Heart right ventricle (tissue), 16 donors: ENCODE measurements at regions of chr7 and their contacts with region 1.

Region 1: DNA sequence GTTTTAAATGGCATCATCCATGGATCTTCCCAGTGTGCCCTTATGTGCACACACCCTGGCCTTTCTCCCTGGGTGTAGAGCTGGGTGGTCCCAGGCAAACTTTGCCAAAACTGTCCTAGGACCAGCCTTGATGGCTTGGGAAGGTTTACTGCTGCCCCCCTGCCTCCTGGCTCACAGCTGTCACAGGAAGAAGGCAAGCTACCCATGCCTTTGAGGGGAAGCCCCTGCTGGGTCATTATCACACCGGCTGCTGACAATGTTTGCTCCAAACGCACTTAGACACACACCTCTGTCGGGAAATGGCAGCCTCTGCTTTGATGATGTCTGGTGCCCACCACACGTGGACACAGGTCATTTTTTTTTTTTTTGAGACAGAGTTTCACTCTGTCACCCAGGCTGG is 25.2 kb upstream of the FIGNL1 start:
- DNase-seq: no peak
- ATAC-seq: no peak
- H3K4me3 ChIP-seq: no peak overlapping the region
- H3K27ac ChIP-seq: no peak overlapping the region
- H3K4me1 ChIP-seq: no peaks in the 10 kb centered on the region
- H3K27me3 ChIP-seq: no peaks in the 10 kb centered on the region
- CTCF ChIP-seq: no peak

Region 2: DNA sequence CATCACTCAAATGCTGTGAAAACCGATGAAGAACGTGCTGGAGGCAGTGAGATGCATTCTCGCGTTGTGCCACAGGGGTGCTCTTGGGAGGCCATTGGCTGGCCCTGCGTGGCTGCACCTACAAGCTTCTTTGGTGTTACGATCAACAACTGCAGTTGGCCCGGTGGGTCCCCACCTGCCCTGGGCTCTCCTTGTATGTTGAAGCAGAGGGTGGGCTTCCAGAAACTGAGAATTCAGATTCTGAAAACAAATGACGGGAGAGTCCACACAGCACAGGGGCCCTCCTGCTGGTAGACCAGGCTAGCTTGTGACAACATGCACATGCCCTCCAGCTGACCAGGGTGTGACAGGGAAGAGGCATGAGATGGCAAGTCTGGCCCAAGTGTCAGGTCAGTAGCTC is 113.6 kb after region 1 on chr7:
- intact Hi-C with region 1: loop called in 3 of 10 experiments (anchors 10 kb)
- DNase-seq: no peak
- ATAC-seq: no peak
- H3K4me3 ChIP-seq: no peak overlapping the region
- H3K27ac ChIP-seq: no peak overlapping the region
- H3K4me1 ChIP-seq: peaks cover 0 to 6% (median 0%) of the 10 kb centered on the region in 9 donors
- H3K27me3 ChIP-seq: no peaks in the 10 kb centered on the region
- CTCF ChIP-seq: peak in 2 of 9 donors; percentile 10 to 16

Region 3: DNA sequence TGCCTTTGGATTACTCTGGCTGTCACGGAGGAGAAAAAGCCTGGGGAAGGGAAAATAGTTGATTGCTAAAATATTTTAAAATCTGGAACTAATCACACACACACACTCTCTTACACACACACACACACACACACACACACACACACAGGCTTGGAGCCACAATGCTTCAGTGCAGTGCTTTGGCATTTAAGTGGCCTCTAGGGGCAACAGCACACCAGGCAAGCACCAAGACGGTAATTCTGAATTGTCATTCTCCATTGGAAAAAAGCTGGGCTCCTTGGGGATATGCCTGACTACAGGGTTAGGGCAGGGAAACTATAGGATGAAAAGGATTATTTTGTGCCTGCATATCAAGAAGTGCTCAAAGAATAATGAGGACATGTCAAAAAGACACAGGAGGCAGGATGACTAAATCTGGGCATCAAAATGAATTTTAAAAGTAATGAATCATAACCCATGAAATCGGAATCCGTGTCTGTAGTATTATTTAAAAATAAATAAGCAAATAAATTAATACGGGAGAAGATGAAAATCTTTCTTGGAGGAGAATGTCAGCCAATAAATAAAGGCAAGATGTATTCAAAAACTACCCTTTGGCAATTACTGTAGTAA is 120.3 kb after region 1 on chr7:
- intact Hi-C with region 1: loop called in 2 of 10 experiments (anchors 10 kb)
- DNase-seq: peak in 1 of 2 donors; percentile 29
- ATAC-seq: peak in 6 of 8 donors; percentile 44 to 67 (median 61)
- H3K4me3 ChIP-seq: no peak overlapping the region
- H3K27ac ChIP-seq: no peak overlapping the region
- H3K4me1 ChIP-seq: no peaks in the 10 kb centered on the region
- H3K27me3 ChIP-seq: no peaks in the 10 kb centered on the region
- CTCF ChIP-seq: peak in 7 of 9 donors; percentile 17 to 53 (median 33)